CD4-positive, alpha-beta T cell (primary cell): ENCODE measurements at regions of chr2 and their contacts with region 1.

Region 1: GRCh38 chr2:172113617-172114016 is 10.9 kb upstream of the DLX2 start:
- DNase-seq: peak in 2 of 14 experiments; percentile 15 to 28
- ATAC-seq: no peak
- H3K4me3 ChIP-seq: no peak overlapping the region
- H3K4me3 Mint-ChIP-seq: no peak overlapping the region
- H3K27ac ChIP-seq: no peak overlapping the region
- H3K27ac Mint-ChIP-seq: no peak overlapping the region
- H3K4me1 ChIP-seq: no peaks in the 10 kb centered on the region
- H3K4me1 Mint-ChIP-seq: peaks cover 3% of the 10 kb centered on the region
- H3K27me3 ChIP-seq: peaks cover 14 to 24% of the 10 kb centered on the region in 2 experiments
- H3K27me3 Mint-ChIP-seq: peaks cover 58% of the 10 kb centered on the region
- CTCF ChIP-seq: peak; percentile 42

Region 2: GRCh38 chr2:171811245-171811628 is 302.4 kb before region 1 on chr2:
- CTCF ChIA-PET with region 1: no interaction called
- POLR2A ChIA-PET with region 1: no interaction called
- intact Hi-C with region 1: loop called in 1 of 2 experiments (anchors 5 kb)
- DNase-seq: peak in 3 of 14 experiments; percentile 23 to 31 (median 24)
- ATAC-seq: no peak
- H3K4me3 ChIP-seq: no peak overlapping the region
- H3K4me3 Mint-ChIP-seq: no peak overlapping the region
- H3K27ac ChIP-seq: no peak overlapping the region
- H3K27ac Mint-ChIP-seq: no peak overlapping the region
- H3K4me1 ChIP-seq: no peaks in the 10 kb centered on the region
- H3K4me1 Mint-ChIP-seq: no peaks in the 10 kb centered on the region
- H3K27me3 ChIP-seq: no peaks in the 10 kb centered on the region
- H3K27me3 Mint-ChIP-seq: no peaks in the 10 kb centered on the region
- CTCF ChIP-seq: peak; percentile 37

Region 3: DNA sequence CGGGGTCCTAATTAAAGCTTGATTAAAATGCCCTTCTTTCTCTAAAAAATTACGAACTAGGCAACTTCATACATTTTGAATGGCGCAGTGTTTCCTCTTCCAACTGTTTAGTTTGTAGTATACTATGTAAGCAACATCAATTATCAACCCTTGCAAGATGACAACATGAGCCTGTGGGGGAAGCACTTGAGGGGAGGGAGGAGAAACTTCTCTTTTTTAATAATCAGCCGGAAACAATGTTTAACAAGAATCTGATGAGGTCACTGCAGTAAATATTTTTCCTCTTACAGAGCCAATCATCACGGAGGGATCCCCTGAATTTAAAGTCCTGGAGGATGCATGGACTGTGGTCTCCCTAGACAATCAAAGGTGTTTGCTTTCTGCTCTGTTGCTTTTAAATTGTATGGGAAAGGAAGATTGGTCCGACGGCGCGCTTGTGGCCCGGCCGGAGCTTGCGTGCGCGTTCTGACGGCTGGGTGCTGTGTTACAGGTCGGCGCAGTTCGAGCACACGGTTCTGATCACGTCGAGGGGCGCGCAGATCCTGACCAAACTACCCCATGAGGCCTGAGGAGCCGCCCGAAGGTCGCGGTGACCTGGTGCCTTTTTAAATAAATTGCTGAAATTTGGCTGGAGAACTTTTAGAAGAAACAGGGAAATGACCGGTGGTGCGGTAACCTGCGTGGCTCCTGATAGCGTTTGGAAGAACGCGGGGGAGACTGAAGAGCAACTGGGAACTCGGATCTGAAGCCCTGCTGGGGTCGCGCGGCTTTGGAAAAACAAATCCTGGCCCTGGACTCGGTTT is 33.6 kb before region 1 on chr2:
- CTCF ChIA-PET with region 1: no interaction called
- POLR2A ChIA-PET with region 1: no interaction called
- intact Hi-C with region 1: loop called in 1 of 2 experiments (anchors 5 kb)
- DNase-seq: peak in 2 of 14 experiments; percentile 21
- ATAC-seq: no peak
- H3K4me3 ChIP-seq: no peak overlapping the region
- H3K4me3 Mint-ChIP-seq: peak overlapping the region; percentile 42
- H3K27ac ChIP-seq: no peak overlapping the region
- H3K27ac Mint-ChIP-seq: peak overlapping the region; percentile 31
- H3K4me1 ChIP-seq: peaks cover 37% of the 10 kb centered on the region
- H3K4me1 Mint-ChIP-seq: peaks cover 41% of the 10 kb centered on the region
- H3K27me3 ChIP-seq: peaks cover 69 to 74% of the 10 kb centered on the region in 2 experiments
- H3K27me3 Mint-ChIP-seq: peaks cover 90% of the 10 kb centered on the region
- CTCF ChIP-seq: no peak